ENCODE measurements at regions of chr18 and their contacts with region 1.

Region 1: GRCh38 chr18:22559414-22560274 is 141.9 kb upstream of the CTAGE1 start:
- DNase-seq: peak; percentile 76 to 79 (median 77)
- ATAC-seq: peak; percentile 58 to 73 (median 64)
- H3K4me3 ChIP-seq: peak overlapping the region; percentile 47 to 59 (median 55)
- H3K27ac ChIP-seq: peak overlapping the region; percentile 90 to 99 (median 97)
- H3K4me1 ChIP-seq: peaks cover 0 to 17% (median 0%) of the 10 kb centered on the region in 4 donors
- H3K27me3 ChIP-seq: no peaks in the 10 kb centered on the region
- CTCF ChIP-seq: no peak
- POLR2A ChIP-seq: peak; percentile 72

Region 2: DNA sequence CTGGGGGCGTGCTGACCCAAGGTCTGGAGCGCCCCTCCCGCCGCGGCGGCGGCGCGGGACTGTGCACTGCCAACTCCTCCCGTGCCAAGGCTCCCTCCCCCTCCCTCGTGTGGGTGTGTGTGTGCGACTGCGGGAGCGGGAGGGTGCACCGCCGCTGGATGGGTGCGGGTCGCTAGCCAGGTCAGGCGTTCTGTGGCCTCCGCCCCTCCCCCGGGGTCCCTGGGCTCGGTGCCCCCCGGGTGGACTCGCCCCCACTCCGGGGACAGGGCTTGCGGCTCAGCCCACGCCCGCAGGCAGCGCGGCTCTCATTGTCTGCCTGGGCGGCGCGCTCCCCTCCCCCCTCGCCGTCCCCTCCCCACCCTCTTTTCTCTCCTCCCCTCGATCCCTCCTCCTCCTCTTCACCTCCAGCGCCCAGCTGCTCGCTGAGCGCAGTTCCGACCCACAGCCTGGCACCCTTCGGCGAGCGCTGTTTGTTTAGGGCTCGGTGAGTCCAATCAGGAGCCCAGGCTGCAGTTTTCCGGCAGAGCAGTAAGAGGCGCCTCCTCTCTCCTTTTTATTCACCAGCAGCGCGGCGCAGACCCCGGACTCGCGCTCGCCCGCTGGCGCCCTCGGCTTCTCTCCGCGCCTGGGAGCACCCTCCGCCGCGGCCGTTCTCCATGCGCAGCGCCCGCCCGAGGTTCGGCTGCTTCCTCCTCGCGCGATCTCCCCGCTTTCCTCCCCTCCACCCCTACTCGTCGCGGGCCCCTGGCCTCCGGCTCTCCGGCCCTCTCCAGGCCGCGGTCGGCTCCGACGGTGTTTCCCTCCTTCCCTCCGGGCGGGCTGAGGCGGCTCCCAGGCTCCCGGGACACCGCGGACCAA is 390.4 kb before region 1 on chr18 and contains the start of gene GATA6:
- intact Hi-C with region 1: loop called in 1 of 2 experiments (anchors 10 kb)
- DNase-seq: peak; percentile 92 to 97 (median 97)
- ATAC-seq: peak; percentile 62 to 83 (median 74)
- H3K4me3 ChIP-seq: peak within 1 kb of the TSS; percentile 50 to 93 (median 72)
- H3K27ac ChIP-seq: peak within 1 kb of the TSS; percentile 90 to 98 (median 95)
- H3K4me1 ChIP-seq: peaks cover 0 to 7% (median 0%) of the 10 kb centered on the region in 4 donors
- H3K27me3 ChIP-seq: no peaks in the 10 kb centered on the region
- CTCF ChIP-seq: peak; percentile 32 to 50 (median 37)
- POLR2A ChIP-seq: peak; percentile 97
- total RNA-seq, gene GATA6: 8.0 to 14.0 (median 9.5) TPM

Region 3: DNA sequence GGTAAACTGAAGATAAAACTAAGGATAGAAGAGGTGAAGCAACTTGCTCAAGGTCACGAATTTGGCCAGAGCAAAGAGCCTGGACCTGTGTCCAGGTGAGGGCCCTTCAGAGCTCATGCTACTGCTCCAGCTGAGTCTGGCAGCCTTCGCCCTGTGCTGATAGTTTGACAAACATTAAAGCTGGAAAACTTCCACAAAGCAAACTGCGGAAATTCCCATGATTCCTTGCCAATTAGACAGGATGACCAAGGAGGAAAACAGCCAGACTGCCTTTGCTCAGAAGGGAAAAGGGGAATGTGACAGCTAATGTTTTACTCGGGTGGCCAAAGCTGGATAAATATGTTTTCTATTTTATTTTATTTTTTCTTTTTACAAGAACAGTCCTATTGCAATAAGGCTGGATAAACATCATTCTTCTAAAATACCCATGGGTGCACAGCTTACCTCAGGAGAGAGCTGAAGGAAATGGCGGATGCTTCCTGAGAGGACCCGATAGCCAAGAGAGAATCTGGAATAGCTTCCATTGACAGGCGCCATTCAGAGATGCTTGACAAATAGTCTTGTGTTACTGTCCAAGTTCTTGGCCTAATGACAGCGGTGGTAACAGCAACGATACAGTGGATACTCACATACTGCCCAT is 136.6 kb before region 1 on chr18:
- intact Hi-C with region 1: loop called in 1 of 2 experiments (anchors 10 kb)
- DNase-seq: peak; percentile 74 to 88 (median 87)
- ATAC-seq: peak; percentile 78 to 87 (median 81)
- H3K4me3 ChIP-seq: no peak overlapping the region
- H3K27ac ChIP-seq: peak overlapping the region; percentile 55 to 88 (median 63)
- H3K4me1 ChIP-seq: peaks cover 0 to 42% (median 13%) of the 10 kb centered on the region in 4 donors
- H3K27me3 ChIP-seq: no peaks in the 10 kb centered on the region
- CTCF ChIP-seq: peak in 1 of 4 donors; percentile 9
- POLR2A ChIP-seq: no peak

Region 4: GRCh38 chr18:22494771-22495170 is 64.9 kb before region 1 on chr18:
- intact Hi-C with region 1: loop called in 1 of 2 experiments (anchors 10 kb)
- DNase-seq: no peak
- ATAC-seq: no peak
- H3K4me3 ChIP-seq: no peak overlapping the region
- H3K27ac ChIP-seq: no peak overlapping the region
- H3K4me1 ChIP-seq: peaks cover 0 to 41% (median 7%) of the 10 kb centered on the region in 4 donors
- H3K27me3 ChIP-seq: no peaks in the 10 kb centered on the region
- CTCF ChIP-seq: no peak
- POLR2A ChIP-seq: no peak